ENCODE measurements at regions of chr13 and their contacts with region 1.

Region 1: DNA sequence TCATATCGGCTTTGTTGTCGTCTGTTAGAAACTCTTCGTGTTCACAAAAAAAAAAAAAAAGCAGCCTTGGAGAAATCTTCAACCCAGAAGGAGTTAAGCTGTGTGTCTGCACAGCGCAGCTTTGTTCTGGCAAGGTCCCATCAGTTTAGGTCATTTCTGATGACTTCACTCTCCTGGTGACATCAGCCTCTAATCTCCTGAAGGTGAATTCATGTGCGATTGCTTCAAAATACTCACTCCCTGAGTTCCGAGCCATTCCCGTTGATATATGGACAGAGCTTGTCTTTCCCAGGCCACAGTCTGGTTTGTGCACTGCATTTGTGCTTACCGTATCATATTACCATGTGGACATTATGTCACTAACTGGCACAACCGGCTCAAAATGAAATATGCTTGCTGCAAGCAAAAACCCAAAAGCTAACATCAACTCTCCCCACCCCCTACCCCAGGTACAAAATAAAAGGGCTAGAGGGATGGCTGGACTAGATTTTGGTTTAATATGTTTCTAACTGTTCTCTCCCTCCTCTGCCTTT is 342.4 kb downstream of the KCNRG start:
- DNase-seq: peak; percentile 90
- ATAC-seq: peak; percentile 92
- H3K4me3 ChIP-seq: peak overlapping the region; percentile 24; the same call in 1 of the 2 replicates
- H3K27ac ChIP-seq: peak overlapping the region; percentile 84
- H3K4me1 ChIP-seq: peaks cover 37% of the 10 kb centered on the region
- H3K27me3 ChIP-seq: no peaks in the 10 kb centered on the region
- CTCF ChIP-seq: no peak

Region 2: GRCh38 chr13:50244713-50245574 is 112.7 kb before region 1 on chr13:
- CTCF ChIA-PET with region 1: no interaction called
- POLR2A ChIA-PET with region 1: no interaction called
- intact Hi-C with region 1: loop called (anchors 2 kb)
- DNase-seq: peak; percentile 90
- ATAC-seq: peak; percentile 98
- H3K4me3 ChIP-seq: peak overlapping the region; percentile 29; the same call in 1 of the 2 replicates
- H3K27ac ChIP-seq: peak overlapping the region; percentile 91
- H3K4me1 ChIP-seq: peaks cover 26% of the 10 kb centered on the region
- H3K27me3 ChIP-seq: no peaks in the 10 kb centered on the region
- CTCF ChIP-seq: no peak

Region 3: GRCh38 chr13:50319635-50320255 is 37.9 kb before region 1 on chr13:
- CTCF ChIA-PET with region 1: no interaction called
- POLR2A ChIA-PET with region 1: no interaction called
- intact Hi-C with region 1: loop called (anchors 2 kb)
- DNase-seq: peak; percentile 75
- ATAC-seq: peak; percentile 78
- H3K4me3 ChIP-seq: peak overlapping the region; percentile 16; the same call in 1 of the 2 replicates
- H3K27ac ChIP-seq: peak overlapping the region; percentile 94
- H3K4me1 ChIP-seq: peaks cover 38% of the 10 kb centered on the region
- H3K27me3 ChIP-seq: no peaks in the 10 kb centered on the region
- CTCF ChIP-seq: no peak

Region 4: DNA sequence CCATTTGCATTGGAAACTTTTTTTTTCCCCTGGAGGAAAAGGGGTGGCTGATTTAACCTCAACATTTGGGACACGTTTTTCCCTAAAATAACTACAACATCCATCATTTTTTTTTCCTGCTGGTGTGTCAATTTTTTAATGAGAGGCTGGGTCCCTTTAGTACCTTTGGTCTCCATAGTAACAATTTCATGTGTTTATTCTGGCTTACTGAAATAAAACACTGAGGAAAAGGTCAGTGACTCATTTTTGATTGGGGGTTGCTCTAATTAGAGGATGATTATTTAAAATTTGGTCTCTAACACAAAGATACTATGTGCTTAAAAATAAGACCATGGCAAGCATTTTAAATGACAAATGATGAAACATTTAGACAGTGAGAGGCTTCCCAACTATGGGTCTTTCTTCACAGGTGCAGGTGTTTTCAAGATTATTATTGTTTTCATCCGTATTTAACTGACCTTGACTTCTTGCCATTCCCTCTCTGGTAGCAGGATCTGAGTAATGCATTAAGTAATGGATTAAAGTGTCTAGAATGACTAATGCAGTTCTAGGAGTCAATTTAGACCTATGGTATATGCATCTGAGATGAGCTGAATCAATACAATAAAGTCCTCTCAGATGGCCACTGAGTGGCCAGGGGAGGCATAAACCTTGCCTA is 64.0 kb after region 1 on chr13:
- CTCF ChIA-PET with region 1: interaction called, 3 read pairs
- POLR2A ChIA-PET with region 1: no interaction called
- intact Hi-C with region 1: loop called (anchors 5 kb)
- DNase-seq: peak; percentile 69
- ATAC-seq: peak; percentile 97
- H3K4me3 ChIP-seq: no peak overlapping the region
- H3K27ac ChIP-seq: peak overlapping the region; percentile 52
- H3K4me1 ChIP-seq: peaks cover 21% of the 10 kb centered on the region
- H3K27me3 ChIP-seq: no peaks in the 10 kb centered on the region
- CTCF ChIP-seq: no peak

Region 5: GRCh38 chr13:50549221-50549942 is 191.7 kb after region 1 on chr13:
- CTCF ChIA-PET with region 1: no interaction called
- POLR2A ChIA-PET with region 1: no interaction called
- intact Hi-C with region 1: no loop called
- DNase-seq: no peak
- ATAC-seq: no peak
- H3K4me3 ChIP-seq: no peak overlapping the region
- H3K27ac ChIP-seq: no peak overlapping the region
- H3K4me1 ChIP-seq: peaks cover 9% of the 10 kb centered on the region; the same call in 1 of the 2 replicates
- H3K27me3 ChIP-seq: no peaks in the 10 kb centered on the region
- CTCF ChIP-seq: no peak